Activated CD8-positive, alpha-beta T cell treated with anti-CD3 and anti-CD28 coated beads, Interleukin-2, amount 10 ng/mL, durations not matched to agents 7 days and 5 days (primary cell): ENCODE measurements at regions of chr9 and their contacts with region 1.

Region 1: GRCh38 chr9:71628247-71628646 is 140.1 kb downstream of the CEMIP2 start:
- DNase-seq: no peak
- ATAC-seq: no peak
- H3K4me3 Mint-ChIP-seq: no peak overlapping the region
- H3K27ac Mint-ChIP-seq: no peak overlapping the region
- H3K4me1 Mint-ChIP-seq: peaks cover 23% of the 10 kb centered on the region
- H3K27me3 Mint-ChIP-seq: peaks cover 10% of the 10 kb centered on the region

Region 2: GRCh38 chr9:71604197-71605063 is 23.8 kb before region 1 on chr9:
- CTCF ChIA-PET with region 1: interaction called, 15 read pairs
- POLR2A ChIA-PET with region 1: no interaction called
- DNase-seq: peak; percentile 88
- ATAC-seq: peak; percentile 89
- H3K4me3 Mint-ChIP-seq: no peak overlapping the region
- H3K27ac Mint-ChIP-seq: no peak overlapping the region
- H3K4me1 Mint-ChIP-seq: no peaks in the 10 kb centered on the region
- H3K27me3 Mint-ChIP-seq: peaks cover 9% of the 10 kb centered on the region

Region 3: GRCh38 chr9:71647094-71647591 is 18.9 kb after region 1 on chr9:
- CTCF ChIA-PET with region 1: interaction called, 12 read pairs
- POLR2A ChIA-PET with region 1: no interaction called
- DNase-seq: peak; percentile 40
- ATAC-seq: peak; percentile 47
- H3K4me3 Mint-ChIP-seq: peak overlapping the region; percentile 59
- H3K27ac Mint-ChIP-seq: peak overlapping the region; percentile 2
- H3K4me1 Mint-ChIP-seq: peaks cover 41% of the 10 kb centered on the region
- H3K27me3 Mint-ChIP-seq: peaks cover 18% of the 10 kb centered on the region

Region 4: DNA sequence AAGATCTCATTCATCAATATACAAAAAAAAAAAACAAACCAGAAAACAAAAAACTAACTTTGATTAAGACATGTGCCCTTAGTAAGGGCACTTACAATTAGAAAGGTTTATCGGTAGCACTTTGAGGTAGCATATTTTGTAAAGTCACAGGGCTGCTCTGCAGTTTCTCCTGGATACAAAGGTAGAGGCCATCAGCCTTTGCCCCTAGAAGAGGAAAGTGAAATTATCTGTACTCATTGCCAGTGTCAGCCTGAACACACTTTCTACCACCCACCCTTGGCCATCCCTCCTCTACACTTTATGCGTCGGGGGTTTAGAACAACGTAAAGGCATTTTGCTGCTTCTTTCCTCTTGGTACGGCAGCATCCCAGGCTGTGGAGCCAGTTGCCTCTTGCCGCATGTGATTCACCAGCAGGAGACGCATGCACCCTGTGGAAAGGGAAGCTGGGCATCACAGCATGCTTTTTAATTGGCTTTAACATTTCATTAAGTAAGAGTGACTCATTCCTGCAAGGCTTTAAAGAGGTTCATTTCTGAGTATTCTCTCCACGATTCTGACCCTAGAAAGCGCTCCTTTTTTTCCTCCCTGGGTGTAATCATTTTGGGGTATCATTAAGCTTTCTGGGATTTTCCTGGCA is 55.5 kb after region 1 on chr9:
- CTCF ChIA-PET with region 1: interaction called, 10 read pairs
- POLR2A ChIA-PET with region 1: no interaction called
- DNase-seq: no peak
- ATAC-seq: no peak
- H3K4me3 Mint-ChIP-seq: peak overlapping the region; percentile 34
- H3K27ac Mint-ChIP-seq: peak overlapping the region; percentile 72
- H3K4me1 Mint-ChIP-seq: peaks cover 35% of the 10 kb centered on the region
- H3K27me3 Mint-ChIP-seq: no peaks in the 10 kb centered on the region

Region 5: DNA sequence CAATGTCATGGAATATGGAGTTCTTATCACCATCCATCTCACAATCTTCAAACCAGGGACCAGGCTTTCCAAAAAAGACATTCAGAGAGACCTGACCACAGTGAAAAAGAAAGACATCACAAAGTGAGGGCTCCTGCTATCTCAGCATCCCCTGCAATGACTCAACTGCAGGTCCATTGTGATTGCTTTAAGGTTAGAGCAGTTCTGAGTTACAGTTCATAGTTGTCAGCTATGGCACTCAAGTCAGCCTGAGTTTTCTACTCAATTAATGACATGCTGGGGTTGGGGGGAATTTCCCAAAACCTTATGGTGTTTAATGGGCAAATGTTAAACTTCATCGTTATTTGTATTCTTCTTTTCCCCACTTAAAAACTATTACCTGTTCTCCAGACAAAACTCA is 81.1 kb after region 1 on chr9:
- CTCF ChIA-PET with region 1: interaction called, 26 read pairs
- POLR2A ChIA-PET with region 1: interaction called, 4 read pairs
- DNase-seq: no peak
- ATAC-seq: no peak
- H3K4me3 Mint-ChIP-seq: no peak overlapping the region
- H3K27ac Mint-ChIP-seq: no peak overlapping the region
- H3K4me1 Mint-ChIP-seq: no peaks in the 10 kb centered on the region
- H3K27me3 Mint-ChIP-seq: no peaks in the 10 kb centered on the region

Region 6: GRCh38 chr9:71716138-71716909 is 88.1 kb after region 1 on chr9:
- CTCF ChIA-PET with region 1: interaction called, 26 read pairs
- POLR2A ChIA-PET with region 1: interaction called, 4 read pairs
- DNase-seq: no peak
- ATAC-seq: no peak
- H3K4me3 Mint-ChIP-seq: no peak overlapping the region
- H3K27ac Mint-ChIP-seq: peak overlapping the region; percentile 57
- H3K4me1 Mint-ChIP-seq: no peaks in the 10 kb centered on the region
- H3K27me3 Mint-ChIP-seq: no peaks in the 10 kb centered on the region